ENCODE measurements at regions of chr4 and their contacts with region 1.

Region 1: DNA sequence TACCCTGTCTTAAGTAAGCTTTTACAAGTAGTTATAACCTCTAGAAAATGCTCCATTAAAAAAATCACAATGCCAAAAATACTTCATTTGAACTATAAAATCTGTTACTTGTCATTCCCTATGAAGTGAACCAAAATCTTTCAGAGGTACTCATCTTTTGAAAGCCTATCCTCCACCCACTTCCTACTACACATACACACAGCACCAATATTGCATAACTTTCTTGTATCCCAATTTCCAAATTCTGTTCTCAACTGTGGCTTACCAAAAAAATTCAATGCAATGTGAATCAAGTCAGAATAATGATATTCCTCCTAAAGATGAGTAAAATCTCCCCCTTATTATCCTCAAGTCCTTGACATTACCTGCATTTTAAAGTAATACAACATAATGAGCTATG is 15.9 kb downstream of the DHX15 start:
- DNase-seq: no peak
- H3K4me3 ChIP-seq: no peak overlapping the region
- H3K27ac ChIP-seq: no peak overlapping the region
- H3K4me1 ChIP-seq: peaks cover 5% of the 10 kb centered on the region
- CTCF ChIP-seq: no peak

Region 2: GRCh38 chr4:24544208-24544988 is 24.0 kb before region 1 on chr4:
- CTCF ChIA-PET with region 1: no interaction called
- POLR2A ChIA-PET with region 1: interaction called, 10 read pairs
- intact Hi-C with region 1: no loop called
- DNase-seq: no peak
- H3K4me3 ChIP-seq: peak overlapping the region; percentile 32
- H3K27ac ChIP-seq: peak overlapping the region; percentile 37
- H3K4me1 ChIP-seq: peaks cover 34% of the 10 kb centered on the region
- CTCF ChIP-seq: no peak

Measured in OCI-LY7 (cell line).